CD4-positive, alpha-beta T cell (primary cell): ENCODE measurements at regions of chr17 and their contacts with region 1.

Region 1: GRCh38 chr17:73379826-73380225 is 68.0 kb upstream of the CDC42EP4 start:
- DNase-seq: no peak
- ATAC-seq: no peak
- H3K4me3 ChIP-seq: no peak overlapping the region
- H3K4me3 Mint-ChIP-seq: no peak overlapping the region
- H3K27ac ChIP-seq: no peak overlapping the region
- H3K27ac Mint-ChIP-seq: no peak overlapping the region
- H3K4me1 ChIP-seq: no peaks in the 10 kb centered on the region
- H3K4me1 Mint-ChIP-seq: no peaks in the 10 kb centered on the region
- H3K27me3 ChIP-seq: no peaks in the 10 kb centered on the region
- H3K27me3 Mint-ChIP-seq: no peaks in the 10 kb centered on the region
- CTCF ChIP-seq: no peak

Region 2: DNA sequence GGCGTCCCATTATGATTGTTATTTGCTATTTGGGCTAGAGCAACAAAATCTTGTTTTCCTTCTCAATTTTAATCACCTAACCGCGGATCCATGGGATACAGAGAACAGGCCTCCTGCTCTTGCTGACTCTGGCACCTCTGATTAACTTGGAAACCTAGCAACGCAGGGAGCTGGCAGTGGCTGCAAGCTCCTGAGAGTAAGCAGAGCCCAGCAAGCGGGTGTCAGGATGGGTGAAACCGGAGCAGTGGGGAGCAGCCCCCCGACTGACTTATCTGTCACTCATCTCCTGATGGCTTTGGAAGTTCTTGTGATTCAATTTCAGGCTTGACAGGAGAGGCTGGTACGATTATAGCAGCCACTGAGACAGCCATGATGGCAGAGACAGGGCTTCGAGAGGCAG is 22.5 kb before region 1 on chr17:
- CTCF ChIA-PET with region 1: no interaction called
- POLR2A ChIA-PET with region 1: no interaction called
- intact Hi-C with region 1: loop called in 1 of 2 experiments (anchors 2 kb)
- DNase-seq: no peak
- ATAC-seq: no peak
- H3K4me3 ChIP-seq: no peak overlapping the region
- H3K4me3 Mint-ChIP-seq: no peak overlapping the region
- H3K27ac ChIP-seq: no peak overlapping the region
- H3K27ac Mint-ChIP-seq: no peak overlapping the region
- H3K4me1 ChIP-seq: no peaks in the 10 kb centered on the region
- H3K4me1 Mint-ChIP-seq: no peaks in the 10 kb centered on the region
- H3K27me3 ChIP-seq: no peaks in the 10 kb centered on the region
- H3K27me3 Mint-ChIP-seq: no peaks in the 10 kb centered on the region
- CTCF ChIP-seq: no peak

Region 3: GRCh38 chr17:73369111-73369521 is 10.7 kb before region 1 on chr17:
- CTCF ChIA-PET with region 1: no interaction called
- POLR2A ChIA-PET with region 1: no interaction called
- intact Hi-C with region 1: no loop called
- DNase-seq: no peak
- ATAC-seq: no peak
- H3K4me3 ChIP-seq: no peak overlapping the region
- H3K4me3 Mint-ChIP-seq: no peak overlapping the region
- H3K27ac ChIP-seq: no peak overlapping the region
- H3K27ac Mint-ChIP-seq: no peak overlapping the region
- H3K4me1 ChIP-seq: no peaks in the 10 kb centered on the region
- H3K4me1 Mint-ChIP-seq: no peaks in the 10 kb centered on the region
- H3K27me3 ChIP-seq: no peaks in the 10 kb centered on the region
- H3K27me3 Mint-ChIP-seq: no peaks in the 10 kb centered on the region
- CTCF ChIP-seq: no peak

Region 4: GRCh38 chr17:73420895-73421294 is 41.1 kb after region 1 on chr17:
- CTCF ChIA-PET with region 1: no interaction called
- POLR2A ChIA-PET with region 1: no interaction called
- intact Hi-C with region 1: no loop called
- DNase-seq: no peak
- ATAC-seq: no peak
- H3K4me3 ChIP-seq: no peak overlapping the region
- H3K4me3 Mint-ChIP-seq: no peak overlapping the region
- H3K27ac ChIP-seq: no peak overlapping the region
- H3K27ac Mint-ChIP-seq: no peak overlapping the region
- H3K4me1 ChIP-seq: no peaks in the 10 kb centered on the region
- H3K4me1 Mint-ChIP-seq: no peaks in the 10 kb centered on the region
- H3K27me3 ChIP-seq: no peaks in the 10 kb centered on the region
- H3K27me3 Mint-ChIP-seq: no peaks in the 10 kb centered on the region
- CTCF ChIP-seq: no peak